ENCODE measurements at regions of chr12 and their contacts with region 1.

Region 1: GRCh38 chr12:117025481-117026151 is 73.6 kb downstream of the TESC start:
- DNase-seq: peak; percentile 45
- H3K4me3 ChIP-seq: no peak overlapping the region
- CTCF ChIP-seq: peak; percentile 87

Region 2: GRCh38 chr12:117105902-117106301 is 80.3 kb after region 1 on chr12:
- in situ Hi-C with region 1: loop called (anchors 5 kb)
- DNase-seq: no peak
- H3K4me3 ChIP-seq: no peak overlapping the region
- CTCF ChIP-seq: no peak